ENCODE measurements at regions of chr11 and their contacts with region 1.

Region 1: DNA sequence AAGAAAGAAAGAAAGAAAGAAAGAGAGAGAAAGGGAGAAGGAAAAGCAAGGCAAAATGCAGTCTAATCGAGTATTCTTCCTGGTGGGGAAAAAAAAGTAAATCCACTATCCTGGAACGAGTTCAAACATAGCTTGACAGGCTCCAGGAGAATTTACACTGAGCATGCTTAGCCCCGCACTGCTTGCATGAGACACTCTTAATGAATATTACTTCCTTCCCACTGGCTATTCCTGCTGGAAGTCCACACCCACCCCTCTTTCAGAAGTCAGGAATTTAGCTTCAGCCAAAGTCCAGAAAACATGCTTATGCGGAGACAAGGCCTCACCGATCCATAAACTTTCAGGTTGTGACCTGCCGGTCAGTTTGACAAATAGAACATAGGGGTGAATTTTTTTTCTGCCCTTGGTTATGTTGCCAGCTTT is 251.8 kb upstream of the BLID start:
- DNase-seq: no peak
- ATAC-seq: peak in 1 of 4 donors; percentile 48
- H3K4me3 ChIP-seq: no peak overlapping the region
- H3K27ac ChIP-seq: no peak overlapping the region
- H3K4me1 ChIP-seq: peaks cover 15% of the 10 kb centered on the region
- H3K27me3 ChIP-seq: no peaks in the 10 kb centered on the region
- CTCF ChIP-seq: no peak

Region 2: GRCh38 chr11:122215244-122215992 is 152.4 kb before region 1 on chr11:
- intact Hi-C with region 1: loop called in 1 of 2 experiments (anchors 10 kb)
- DNase-seq: peak; percentile 78 to 89
- ATAC-seq: peak; percentile 94 to 98 (median 98)
- H3K4me3 ChIP-seq: no peak overlapping the region
- H3K27ac ChIP-seq: peak overlapping the region; percentile 64
- H3K4me1 ChIP-seq: peaks cover 12% of the 10 kb centered on the region
- H3K27me3 ChIP-seq: no peaks in the 10 kb centered on the region
- CTCF ChIP-seq: peak; percentile 92

Region 3: DNA sequence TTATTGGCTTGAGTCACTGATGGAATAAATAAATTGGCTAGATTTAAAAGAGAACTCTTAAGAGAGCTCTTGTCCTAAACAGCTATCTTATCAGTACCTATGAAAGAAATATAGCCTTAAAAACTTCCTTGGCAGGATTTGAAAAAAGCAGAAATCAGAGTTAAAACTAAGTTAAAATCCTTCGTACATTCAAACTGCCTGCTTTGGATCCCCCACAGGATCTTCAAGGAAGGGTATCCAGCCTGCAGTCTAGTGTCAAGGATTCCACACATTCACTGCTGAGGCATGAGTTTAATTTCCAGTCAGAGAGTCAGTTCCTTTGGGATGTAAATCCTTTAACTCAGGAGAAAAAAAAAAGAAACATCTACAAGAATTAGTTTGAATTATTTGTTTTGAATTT is 44.8 kb after region 1 on chr11:
- intact Hi-C with region 1: loop called in 1 of 2 experiments (anchors 5 kb)
- DNase-seq: no peak
- ATAC-seq: no peak
- H3K4me3 ChIP-seq: no peak overlapping the region
- H3K27ac ChIP-seq: no peak overlapping the region
- H3K4me1 ChIP-seq: no peaks in the 10 kb centered on the region
- H3K27me3 ChIP-seq: no peaks in the 10 kb centered on the region
- CTCF ChIP-seq: no peak

Region 4: GRCh38 chr11:122717264-122717867 is 349.5 kb after region 1 on chr11:
- intact Hi-C with region 1: no loop called
- DNase-seq: no peak
- ATAC-seq: no peak
- H3K4me3 ChIP-seq: no peak overlapping the region
- H3K27ac ChIP-seq: no peak overlapping the region
- H3K4me1 ChIP-seq: no peaks in the 10 kb centered on the region
- H3K27me3 ChIP-seq: no peaks in the 10 kb centered on the region
- CTCF ChIP-seq: no peak

Measured in psoas muscle (tissue), 8 donors.